ENCODE measurements at regions of chr1 and their contacts with region 1.

Region 1: DNA sequence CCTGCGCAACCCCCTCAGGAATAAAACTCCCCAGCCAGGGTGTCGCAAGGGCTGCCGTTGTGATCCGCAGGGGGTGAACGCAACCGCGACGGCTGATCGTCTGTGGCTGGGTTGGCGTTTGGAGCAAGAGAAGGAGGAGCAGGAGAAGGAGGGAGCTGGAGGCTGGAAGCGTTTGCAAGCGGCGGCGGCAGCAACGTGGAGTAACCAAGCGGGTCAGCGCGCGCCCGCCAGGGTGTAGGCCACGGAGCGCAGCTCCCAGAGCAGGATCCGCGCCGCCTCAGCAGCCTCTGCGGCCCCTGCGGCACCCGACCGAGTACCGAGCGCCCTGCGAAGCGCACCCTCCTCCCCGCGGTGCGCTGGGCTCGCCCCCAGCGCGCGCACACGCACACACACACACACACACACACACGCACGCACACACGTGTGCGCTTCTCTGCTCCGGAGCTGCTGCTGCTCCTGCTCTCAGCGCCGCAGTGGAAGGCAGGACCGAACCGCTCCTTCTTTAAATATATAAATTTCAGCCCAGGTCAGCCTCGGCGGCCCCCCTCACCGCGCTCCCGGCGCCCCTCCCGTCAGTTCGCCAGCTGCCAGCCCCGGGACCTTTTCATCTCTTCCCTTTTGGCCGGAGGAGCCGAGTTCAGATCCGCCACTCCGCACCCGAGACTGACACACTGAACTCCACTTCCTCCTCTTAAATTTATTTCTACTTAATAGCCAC is 696 bp downstream of the TGFB2 start:
- DNase-seq: peak; percentile 49 to 53
- ATAC-seq: peak; percentile 82

Region 2: DNA sequence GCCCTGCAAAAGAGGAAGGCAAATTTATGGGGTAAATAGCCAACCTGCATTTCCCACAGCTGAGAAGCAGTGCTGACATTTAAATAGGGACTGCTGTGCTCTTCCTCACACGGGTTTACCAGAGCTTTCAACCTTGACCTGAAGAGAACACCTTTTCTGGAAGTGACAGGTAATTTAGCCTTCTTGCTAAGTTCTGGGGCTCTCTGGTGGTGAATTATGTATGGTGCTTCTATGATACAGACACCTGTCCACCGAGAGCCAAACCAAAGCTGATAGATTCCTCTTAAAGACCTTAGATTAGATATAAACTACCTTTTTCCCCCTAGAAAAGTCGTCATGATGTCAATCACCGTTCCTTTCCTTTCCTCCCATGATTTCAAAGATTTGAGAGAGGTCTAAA is 400.8 kb before region 1 on chr1:
- intact Hi-C with region 1: no loop called
- DNase-seq: no peak
- ATAC-seq: no peak

Region 3: DNA sequence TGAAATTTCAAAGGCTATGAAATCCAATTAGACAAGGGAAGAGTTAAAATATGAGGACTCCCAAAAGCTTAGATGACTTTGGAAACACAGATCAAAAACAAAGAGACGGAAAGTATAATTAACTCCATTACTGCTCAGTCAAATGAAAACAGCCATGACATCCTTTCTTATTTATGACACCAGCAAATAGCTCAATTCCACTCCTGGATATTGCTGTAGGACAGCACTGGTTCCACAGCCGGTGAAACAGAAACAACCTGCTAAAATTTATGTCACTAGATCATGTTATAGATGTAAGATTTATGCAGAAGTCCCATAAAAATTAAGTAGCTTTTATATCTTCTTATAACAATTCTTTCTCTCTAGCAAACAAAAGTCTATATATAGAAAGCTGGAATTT is 126.4 kb before region 1 on chr1:
- intact Hi-C with region 1: no loop called
- DNase-seq: no peak
- ATAC-seq: no peak

Region 4: DNA sequence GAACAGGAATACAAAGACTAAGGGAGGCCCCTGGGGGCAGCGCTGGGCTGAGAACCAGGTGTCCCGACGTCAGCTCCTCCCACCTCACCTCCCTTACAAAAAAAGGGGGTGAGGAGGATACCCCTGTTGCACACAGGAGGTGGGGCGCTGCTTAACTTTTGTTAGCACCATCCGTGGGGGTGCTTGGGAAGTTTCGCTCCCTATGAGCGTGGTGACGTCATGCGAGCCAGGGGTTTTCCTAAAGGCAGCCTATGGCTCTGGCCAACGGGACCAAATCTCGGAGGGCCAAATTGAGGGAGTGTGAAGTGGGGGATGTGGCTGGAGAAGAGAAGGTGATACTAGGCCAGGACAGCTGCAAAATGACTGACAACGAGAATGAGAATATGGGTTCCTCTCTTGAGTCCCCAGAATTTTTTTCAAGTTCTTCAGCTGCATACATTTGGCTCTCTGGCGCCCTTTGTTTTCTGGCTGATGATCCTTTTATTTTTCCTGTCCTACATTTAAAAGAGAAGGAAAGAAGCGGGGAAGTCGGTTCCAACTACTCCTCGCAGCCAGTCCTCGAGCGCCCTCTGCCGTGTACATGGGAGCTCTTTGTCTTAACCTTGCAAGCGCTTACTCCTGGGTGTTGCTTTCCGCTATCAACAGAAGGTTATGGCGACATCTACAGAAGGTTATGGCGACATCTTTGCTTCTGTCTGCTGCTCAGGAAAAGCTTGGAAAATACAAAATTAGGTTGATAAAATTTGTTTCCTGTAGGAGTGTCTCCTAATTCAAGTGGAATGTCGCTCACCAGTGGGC is 1315.0 kb after region 1 on chr1:
- intact Hi-C with region 1: loop called in 1 of 2 experiments (anchors 10 kb)
- DNase-seq: peak; percentile 69 to 84
- ATAC-seq: peak; percentile 63

Measured in left colon (tissue), 2 donors.